IMR-90 (cell line): ENCODE measurements at regions of chr11 and their contacts with region 1.

Region 1: DNA sequence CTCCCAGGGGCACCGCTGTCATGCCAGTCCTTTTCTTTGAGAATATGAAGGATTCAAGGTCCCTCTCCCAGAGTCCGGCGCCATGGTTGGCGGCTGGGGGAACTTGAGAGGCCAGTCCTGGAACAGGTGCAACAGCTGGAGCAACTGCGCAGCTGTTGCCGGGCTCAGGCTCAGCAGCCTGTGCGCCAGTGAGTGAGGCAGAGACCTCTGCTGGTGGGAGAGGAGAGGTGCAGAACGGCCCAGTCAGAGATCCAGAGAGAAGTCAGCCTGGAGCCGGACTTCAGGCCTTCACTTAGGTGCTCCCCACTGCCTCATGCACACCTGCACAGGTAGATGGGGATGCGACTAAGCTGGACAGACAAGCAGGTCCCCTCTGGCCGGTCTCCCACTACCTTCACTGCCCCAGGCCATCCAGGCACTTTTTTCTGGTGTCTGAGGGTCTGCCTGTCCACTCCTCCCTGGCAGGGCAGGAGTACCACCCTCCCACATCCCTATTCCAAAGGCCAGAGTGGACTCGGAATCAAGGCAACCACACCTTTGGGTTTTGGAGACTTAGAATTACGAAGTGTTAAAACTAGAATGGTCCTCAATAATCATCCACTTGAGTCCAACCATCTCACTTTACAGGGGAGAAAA is 4.6 kb downstream of the CHRDL2 start:
- DNase-seq: peak; percentile 85
- ATAC-seq: peak; percentile 78
- H3K4me3 ChIP-seq: no peak overlapping the region
- H3K27ac ChIP-seq: peak overlapping the region; percentile 61; the same call in 1 of the 2 replicates
- H3K4me1 ChIP-seq: peaks cover 28% of the 10 kb centered on the region
- H3K27me3 ChIP-seq: peaks cover 34% of the 10 kb centered on the region
- CTCF ChIP-seq: peak; percentile 97
- POLR2A ChIP-seq: peak; percentile 35; the same call in 1 of the 2 replicates
- RAD21 ChIP-seq: peak; percentile 97

Region 2: GRCh38 chr11:74459584-74459983 is 267.1 kb before region 1 on chr11:
- CTCF ChIA-PET with region 1: no interaction called
- POLR2A ChIA-PET with region 1: no interaction called
- dilution Hi-C with region 1: no loop called
- in situ Hi-C with region 1: loop called (anchors 5 kb)
- intact Hi-C with region 1: no loop called
- DNase-seq: no peak
- ATAC-seq: no peak
- H3K4me3 ChIP-seq: no peak overlapping the region
- H3K27ac ChIP-seq: no peak overlapping the region
- H3K4me1 ChIP-seq: peaks cover 4% of the 10 kb centered on the region; the same call in 1 of the 2 replicates
- H3K27me3 ChIP-seq: peaks cover 16% of the 10 kb centered on the region
- CTCF ChIP-seq: no peak
- POLR2A ChIP-seq: no peak
- RAD21 ChIP-seq: no peak

Region 3: DNA sequence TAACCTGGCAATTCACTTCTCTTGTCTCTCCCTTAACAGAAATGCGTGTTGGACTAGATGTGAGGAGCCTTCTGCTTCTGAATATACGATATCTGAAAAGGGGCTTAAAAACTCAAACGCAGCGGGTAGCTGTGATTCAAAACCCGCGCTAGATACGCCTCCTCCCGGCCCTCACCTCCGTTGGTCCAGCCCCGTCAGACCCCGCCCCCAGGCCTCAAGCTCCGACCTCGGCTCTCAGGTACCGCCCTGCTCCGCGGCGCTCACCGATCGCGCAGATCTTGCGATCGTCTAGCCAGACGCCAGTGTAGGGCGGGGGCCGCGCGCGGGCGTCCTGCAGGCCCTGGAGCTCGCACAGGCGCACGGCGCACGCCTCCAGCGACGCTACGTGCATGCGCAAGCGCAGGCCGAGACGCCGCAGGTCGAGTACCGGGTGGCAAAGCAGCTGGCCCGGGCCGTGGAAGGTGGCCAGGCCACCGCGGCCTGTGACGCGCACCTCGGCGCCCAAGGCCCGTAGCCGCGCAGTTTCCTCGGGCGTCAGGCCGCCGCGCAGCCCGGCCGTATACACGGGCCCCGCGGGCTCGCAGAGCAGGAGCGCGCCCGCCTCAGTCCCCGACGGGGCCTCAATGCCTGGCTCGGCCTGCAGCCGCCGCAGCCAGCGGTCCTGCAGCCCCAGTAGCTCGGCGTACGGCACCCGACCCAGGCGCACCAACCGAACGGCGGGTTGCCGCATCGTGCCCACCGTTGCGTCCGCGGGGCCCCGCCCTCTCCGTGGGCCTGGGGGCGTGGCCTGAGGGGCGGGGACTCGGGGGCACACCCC is 233.5 kb before region 1 on chr11 and contains the start of gene LIPT2:
- CTCF ChIA-PET with region 1: no interaction called
- POLR2A ChIA-PET with region 1: no interaction called
- dilution Hi-C with region 1: no loop called
- in situ Hi-C with region 1: no loop called
- intact Hi-C with region 1: no loop called
- DNase-seq: peak; percentile 95
- ATAC-seq: peak; percentile 99
- H3K4me3 ChIP-seq: peak within 1 kb of the TSS; percentile 77
- H3K27ac ChIP-seq: peak within 1 kb of the TSS; percentile 67
- H3K4me1 ChIP-seq: no peaks in the 10 kb centered on the region
- H3K27me3 ChIP-seq: no peaks in the 10 kb centered on the region
- CTCF ChIP-seq: no peak
- POLR2A ChIP-seq: peak; percentile 32; the same call in 1 of the 2 replicates
- RAD21 ChIP-seq: no peak
- total RNA-seq, gene LIPT2: 2.2 and 2.9 TPM in 2 replicates

Region 4: GRCh38 chr11:74611369-74611861 is 115.2 kb before region 1 on chr11:
- CTCF ChIA-PET with region 1: interaction called, 8 read pairs
- POLR2A ChIA-PET with region 1: no interaction called
- dilution Hi-C with region 1: loop called (anchors 25 kb)
- in situ Hi-C with region 1: loop called (anchors 5 kb)
- intact Hi-C with region 1: loop called (anchors 1 kb)
- DNase-seq: peak; percentile 87
- ATAC-seq: peak; percentile 86
- H3K4me3 ChIP-seq: no peak overlapping the region
- H3K27ac ChIP-seq: no peak overlapping the region
- H3K4me1 ChIP-seq: peaks cover 8% of the 10 kb centered on the region
- H3K27me3 ChIP-seq: no peaks in the 10 kb centered on the region
- CTCF ChIP-seq: peak; percentile 60
- POLR2A ChIP-seq: no peak
- RAD21 ChIP-seq: peak; percentile 65

Region 5: GRCh38 chr11:74650498-74650897 is 76.2 kb before region 1 on chr11:
- CTCF ChIA-PET with region 1: no interaction called
- POLR2A ChIA-PET with region 1: no interaction called
- dilution Hi-C with region 1: no loop called
- in situ Hi-C with region 1: no loop called
- intact Hi-C with region 1: loop called (anchors 1 kb)
- DNase-seq: peak; percentile 100
- ATAC-seq: peak; percentile 93
- H3K4me3 ChIP-seq: no peak overlapping the region
- H3K27ac ChIP-seq: peak overlapping the region; percentile 4; the same call in 1 of the 2 replicates
- H3K4me1 ChIP-seq: peaks cover 33% of the 10 kb centered on the region
- H3K27me3 ChIP-seq: no peaks in the 10 kb centered on the region
- CTCF ChIP-seq: 0 out of 2 replicates have a peak, but pooled peaks have one; percentile 5
- POLR2A ChIP-seq: no peak
- RAD21 ChIP-seq: peak; percentile 40; the same call in 1 of the 2 replicates

Region 6: DNA sequence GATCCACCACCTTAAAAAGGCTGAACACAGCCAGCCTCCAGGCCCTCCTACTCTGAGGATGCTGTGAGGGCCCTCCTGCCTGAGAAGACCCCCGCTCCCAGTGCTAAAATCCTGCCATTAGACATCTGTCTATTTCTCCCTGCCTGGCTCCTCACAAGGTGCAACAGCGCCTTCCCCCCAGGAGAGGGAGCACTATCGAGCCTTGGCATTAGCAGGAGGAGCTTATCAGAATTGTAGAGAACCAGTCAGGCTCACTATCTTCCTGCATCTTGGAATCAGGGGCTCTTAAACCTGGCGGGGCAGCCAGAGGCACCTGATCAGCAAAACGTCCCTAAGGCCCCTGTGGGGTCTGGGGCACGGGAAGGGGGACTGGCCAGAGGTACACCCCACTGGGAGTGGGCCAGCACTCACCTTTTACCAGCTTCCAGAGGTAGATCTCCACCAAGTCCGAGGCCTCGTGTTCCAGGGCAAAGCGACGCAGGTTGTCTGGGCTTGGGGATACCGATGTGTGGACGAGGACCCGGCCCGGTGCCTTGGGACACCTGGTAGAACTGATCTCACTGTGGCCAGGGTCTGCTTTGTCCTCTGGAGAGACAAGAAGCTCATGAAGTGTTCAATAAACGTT is 24.2 kb before region 1 on chr11:
- CTCF ChIA-PET with region 1: interaction called, 66 read pairs
- POLR2A ChIA-PET with region 1: no interaction called
- dilution Hi-C with region 1: no loop called
- in situ Hi-C with region 1: no loop called
- intact Hi-C with region 1: loop called (anchors 1 kb)
- DNase-seq: peak; percentile 76
- ATAC-seq: peak; percentile 97
- H3K4me3 ChIP-seq: no peak overlapping the region
- H3K27ac ChIP-seq: no peak overlapping the region
- H3K4me1 ChIP-seq: peaks cover 2% of the 10 kb centered on the region
- H3K27me3 ChIP-seq: no peaks in the 10 kb centered on the region
- CTCF ChIP-seq: peak; percentile 95
- POLR2A ChIP-seq: no peak
- RAD21 ChIP-seq: peak; percentile 83

Region 7: DNA sequence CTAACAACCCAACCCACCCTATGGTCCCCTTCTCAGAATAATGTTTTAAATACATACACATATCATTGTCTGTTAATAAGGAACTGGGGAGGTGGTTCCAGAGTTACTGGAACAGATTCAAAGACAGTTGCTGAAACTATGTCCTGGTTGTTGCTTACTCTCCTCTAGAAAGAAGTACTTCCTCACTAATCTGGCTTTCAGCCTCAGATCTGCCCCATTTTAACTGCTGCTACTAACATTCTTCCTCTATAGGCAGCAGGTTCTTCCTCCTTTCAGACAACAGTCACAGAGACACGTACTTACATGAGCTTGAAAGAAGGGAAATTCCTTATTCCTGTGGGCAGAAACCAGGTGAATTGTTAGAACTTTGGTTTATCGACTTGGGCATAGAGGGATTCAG is 254.0 kb after region 1 on chr11:
- CTCF ChIA-PET with region 1: no interaction called
- POLR2A ChIA-PET with region 1: no interaction called
- dilution Hi-C with region 1: no loop called
- in situ Hi-C with region 1: no loop called
- intact Hi-C with region 1: no loop called
- DNase-seq: no peak
- ATAC-seq: no peak
- H3K4me3 ChIP-seq: no peak overlapping the region
- H3K27ac ChIP-seq: no peak overlapping the region
- H3K4me1 ChIP-seq: no peaks in the 10 kb centered on the region
- H3K27me3 ChIP-seq: no peaks in the 10 kb centered on the region
- CTCF ChIP-seq: no peak
- POLR2A ChIP-seq: no peak
- RAD21 ChIP-seq: no peak